Breast epithelium (tissue), 4 donors: ENCODE measurements at regions of chr6 and their contacts with region 1.

Region 1: GRCh38 chr6:97312245-97312644 is 29.2 kb upstream of the MMS22L start:
- DNase-seq: no peak
- H3K4me3 ChIP-seq: no peak overlapping the region
- H3K27ac ChIP-seq: no peak overlapping the region
- H3K4me1 ChIP-seq: no peaks in the 10 kb centered on the region
- H3K27me3 ChIP-seq: no peaks in the 10 kb centered on the region
- CTCF ChIP-seq: no peak
- POLR2A ChIP-seq: no peak

Region 2: DNA sequence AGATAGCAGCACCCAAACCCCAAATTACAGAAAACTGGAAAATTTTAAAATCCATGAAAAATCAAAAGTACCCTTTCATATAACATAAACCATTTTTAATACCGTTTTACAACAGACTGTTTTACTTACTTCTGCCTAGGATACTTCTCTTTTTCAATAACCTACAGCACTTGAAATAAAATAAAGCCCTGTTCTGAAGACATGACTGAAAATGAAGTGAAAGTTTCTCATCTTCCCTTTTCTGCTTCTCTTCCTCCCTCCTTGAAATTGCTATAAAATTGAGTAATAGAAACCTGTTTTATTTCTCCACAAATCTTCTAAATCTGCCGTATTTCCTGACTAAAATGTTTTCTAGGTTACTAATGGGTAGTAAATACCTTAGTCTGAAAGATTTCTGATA is 49.6 kb before region 1 on chr6:
- intact Hi-C with region 1: no loop called
- DNase-seq: no peak
- H3K4me3 ChIP-seq: no peak overlapping the region
- H3K27ac ChIP-seq: no peak overlapping the region
- H3K4me1 ChIP-seq: no peaks in the 10 kb centered on the region
- H3K27me3 ChIP-seq: no peaks in the 10 kb centered on the region
- CTCF ChIP-seq: no peak
- POLR2A ChIP-seq: no peak

Region 3: DNA sequence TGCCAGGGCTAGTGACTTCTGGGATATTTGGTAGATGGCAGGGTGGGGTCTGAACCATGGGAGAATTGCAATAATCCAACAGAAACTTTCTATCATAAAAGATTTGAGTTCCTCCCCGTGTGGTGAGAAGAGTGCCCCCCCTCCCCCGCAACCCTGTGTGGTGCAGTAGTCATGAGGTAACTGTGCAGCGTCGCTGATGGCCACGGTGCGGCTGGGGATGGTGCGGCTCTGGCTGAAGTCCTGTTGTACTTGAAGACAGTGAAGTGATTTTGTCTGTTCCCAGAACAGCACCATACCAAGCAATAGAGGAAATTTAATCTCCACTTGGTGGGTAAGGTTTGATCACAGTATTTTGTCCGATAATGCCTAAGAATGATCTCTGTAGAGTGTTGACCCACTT is 867.4 kb after region 1 on chr6:
- intact Hi-C with region 1: loop called (anchors 5 kb)
- DNase-seq: no peak
- H3K4me3 ChIP-seq: no peak overlapping the region
- H3K27ac ChIP-seq: no peak overlapping the region
- H3K4me1 ChIP-seq: no peaks in the 10 kb centered on the region
- H3K27me3 ChIP-seq: no peaks in the 10 kb centered on the region
- CTCF ChIP-seq: no peak
- POLR2A ChIP-seq: no peak